ENCODE measurements at regions of chr7 and their contacts with region 1.

Region 1: GRCh38 chr7:32588657-32589056 is 93.4 kb downstream of the AVL9 start:
- DNase-seq: no peak
- H3K4me3 ChIP-seq: no peak overlapping the region
- H3K27ac ChIP-seq: peak overlapping the region; percentile 94
- H3K4me1 ChIP-seq: peaks cover 50% of the 10 kb centered on the region
- H3K27me3 ChIP-seq: no peaks in the 10 kb centered on the region
- CTCF ChIP-seq: no peak

Region 2: DNA sequence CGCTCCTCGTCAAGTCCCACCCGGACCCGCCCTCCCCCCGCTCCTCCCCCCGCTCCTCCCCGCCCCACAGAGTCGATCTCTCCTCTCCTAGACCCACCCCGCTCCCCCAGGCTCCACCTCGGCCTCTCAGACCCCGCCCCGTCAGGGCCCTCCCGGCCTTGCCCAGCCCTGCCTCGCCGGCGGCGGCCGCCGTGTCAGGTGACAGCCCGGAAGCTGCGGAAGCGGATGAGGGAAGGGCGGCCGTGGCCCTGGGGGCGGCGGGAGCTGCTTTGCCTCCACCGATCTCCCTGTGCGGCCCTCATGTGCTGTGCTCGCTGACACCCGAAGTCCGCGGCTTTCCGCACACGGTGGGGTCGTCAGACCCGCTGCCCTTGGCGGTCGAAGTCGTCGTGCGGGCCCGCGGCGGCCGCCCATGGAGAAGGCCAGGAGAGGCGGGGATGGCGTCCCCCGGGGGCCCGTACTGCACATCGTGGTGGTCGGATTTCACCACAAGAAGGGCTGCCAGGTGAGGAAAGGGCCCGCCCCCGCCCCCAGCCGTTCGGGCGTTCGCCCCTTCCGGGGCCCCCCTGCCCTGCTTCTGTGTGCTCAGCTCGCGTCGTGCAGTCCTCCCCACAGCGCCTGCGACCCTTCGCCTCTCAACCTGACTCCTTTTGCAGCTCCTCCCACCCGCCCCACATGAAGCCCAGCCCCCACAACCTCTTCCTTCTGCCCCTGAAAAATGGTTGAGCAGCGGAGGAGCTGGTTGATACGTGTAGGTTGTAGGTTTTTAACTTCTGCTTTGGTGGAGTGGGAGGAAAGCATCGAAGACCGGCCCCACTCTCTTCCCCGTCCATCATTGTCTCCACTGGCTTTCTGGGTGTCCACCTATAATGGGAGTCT is 93.1 kb before region 1 on chr7 and contains the start of gene AVL9:
- intact Hi-C with region 1: loop called (anchors 10 kb)
- DNase-seq: peak; percentile 99
- H3K4me3 ChIP-seq: peak within 1 kb of the TSS; percentile 99
- H3K27ac ChIP-seq: peak within 1 kb of the TSS; percentile 98
- H3K4me1 ChIP-seq: peaks cover 38% of the 10 kb centered on the region
- H3K27me3 ChIP-seq: no peaks in the 10 kb centered on the region
- CTCF ChIP-seq: no peak
- total RNA-seq, gene AVL9: 11.8 TPM

Region 3: DNA sequence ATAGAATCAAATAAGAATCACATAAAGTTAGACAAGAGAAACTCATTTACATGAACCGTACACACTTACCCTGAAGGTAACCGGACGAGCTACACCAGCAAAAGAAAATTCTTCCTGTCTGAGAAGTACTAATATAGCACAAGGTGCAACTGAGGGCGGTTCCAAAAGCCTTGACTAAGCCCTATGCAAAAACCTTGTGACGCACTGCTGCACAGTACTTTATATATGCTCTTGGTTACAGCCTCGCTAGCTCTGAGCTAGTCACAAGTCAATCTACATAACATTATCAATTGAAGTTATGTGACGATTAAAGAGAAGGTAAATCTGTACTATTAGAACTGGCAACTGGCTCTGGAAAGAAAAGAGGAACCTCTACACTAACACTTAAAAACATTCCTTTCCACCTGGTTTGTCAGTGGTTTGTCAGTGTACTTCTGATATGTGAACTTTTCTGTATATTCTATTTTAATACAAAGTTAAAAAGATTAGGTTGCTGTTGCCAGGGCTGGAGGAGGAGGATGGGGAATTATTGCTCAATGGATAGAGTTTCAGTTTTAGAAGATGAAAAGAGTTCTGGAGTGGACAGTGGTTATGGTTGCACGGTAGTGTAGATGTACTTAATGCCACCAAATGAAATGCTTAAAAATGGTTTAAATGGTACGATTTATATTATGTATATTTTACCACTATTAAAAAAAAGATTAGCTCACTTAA is 452.3 kb after region 1 on chr7:
- intact Hi-C with region 1: no loop called
- DNase-seq: no peak
- H3K4me3 ChIP-seq: peak overlapping the region; percentile 63
- H3K27ac ChIP-seq: peak overlapping the region; percentile 78
- H3K4me1 ChIP-seq: peaks cover 77% of the 10 kb centered on the region
- H3K27me3 ChIP-seq: no peaks in the 10 kb centered on the region
- CTCF ChIP-seq: no peak